CD4-positive, alpha-beta memory T cell (primary cell): ENCODE measurements at regions of chr16 and their contacts with region 1.

Region 1: GRCh38 chr16:2926650-2927646 is 15.2 kb downstream of the FLYWCH1 start:
- DNase-seq: peak; percentile 85 to 89 (median 87)
- H3K4me3 ChIP-seq: no peak overlapping the region
- H3K4me3 Mint-ChIP-seq: peak overlapping the region in 5 of 8 donors; percentile 13 to 56 (median 36)
- H3K27ac ChIP-seq: no peak overlapping the region
- H3K27ac Mint-ChIP-seq: peak overlapping the region; percentile 0 to 90 (median 53)
- H3K4me1 ChIP-seq: peaks cover 12% of the 10 kb centered on the region
- H3K4me1 Mint-ChIP-seq: peaks cover 7 to 21% (median 16%) of the 10 kb centered on the region in 4 donors
- H3K27me3 ChIP-seq: no peaks in the 10 kb centered on the region
- H3K27me3 Mint-ChIP-seq: no peaks in the 10 kb centered on the region

Region 2: GRCh38 chr16:2874912-2875362 is 52.0 kb before region 1 on chr16:
- CTCF ChIA-PET with region 1: interaction called, 18 read pairs
- POLR2A ChIA-PET with region 1: interaction called, 3 read pairs
- intact Hi-C with region 1: loop called (anchors 2 kb)
- DNase-seq: peak; percentile 53 to 64 (median 57)
- H3K4me3 ChIP-seq: no peak overlapping the region
- H3K4me3 Mint-ChIP-seq: no peak overlapping the region
- H3K27ac ChIP-seq: no peak overlapping the region
- H3K27ac Mint-ChIP-seq: peak overlapping the region in 3 of 7 donors; percentile 12 to 71 (median 68)
- H3K4me1 ChIP-seq: peaks cover 4% of the 10 kb centered on the region
- H3K4me1 Mint-ChIP-seq: peaks cover 0 to 4% (median 2%) of the 10 kb centered on the region in 4 donors
- H3K27me3 ChIP-seq: no peaks in the 10 kb centered on the region
- H3K27me3 Mint-ChIP-seq: peaks cover 0 to 2% of the 10 kb centered on the region in 2 donors

Region 3: GRCh38 chr16:2911580-2912329 is 15.2 kb before region 1 on chr16 and contains the start of gene FLYWCH1:
- CTCF ChIA-PET with region 1: interaction called, 29 read pairs
- POLR2A ChIA-PET with region 1: interaction called, 14 read pairs
- intact Hi-C with region 1: no loop called
- DNase-seq: peak; percentile 97 to 98 (median 97)
- H3K4me3 ChIP-seq: peak within 1 kb of the TSS; percentile 78 to 84
- H3K4me3 Mint-ChIP-seq: peak within 1 kb of the TSS; percentile 91 to 97 (median 92)
- H3K27ac ChIP-seq: peak within 1 kb of the TSS; percentile 72
- H3K27ac Mint-ChIP-seq: peak within 1 kb of the TSS; percentile 87 to 97 (median 94)
- H3K4me1 ChIP-seq: peaks cover 20% of the 10 kb centered on the region
- H3K4me1 Mint-ChIP-seq: peaks cover 13 to 32% (median 23%) of the 10 kb centered on the region in 4 donors
- H3K27me3 ChIP-seq: no peaks in the 10 kb centered on the region
- H3K27me3 Mint-ChIP-seq: no peaks in the 10 kb centered on the region
- total RNA-seq, gene FLYWCH1: 121 to 123 TPM